Heart right ventricle (tissue), 16 donors: ENCODE measurements at regions of chrX and their contacts with region 1.

Region 1: GRCh38 chrX:149363965-149364364 is 141.1 kb downstream of the IDS start:
- DNase-seq: no peak
- ATAC-seq: no peak
- H3K4me3 ChIP-seq: no peak overlapping the region
- H3K27ac ChIP-seq: no peak overlapping the region
- H3K4me1 ChIP-seq: no peaks in the 10 kb centered on the region
- H3K27me3 ChIP-seq: peaks cover 0 to 6% (median 0%) of the 10 kb centered on the region in 7 donors
- CTCF ChIP-seq: no peak

Region 2: DNA sequence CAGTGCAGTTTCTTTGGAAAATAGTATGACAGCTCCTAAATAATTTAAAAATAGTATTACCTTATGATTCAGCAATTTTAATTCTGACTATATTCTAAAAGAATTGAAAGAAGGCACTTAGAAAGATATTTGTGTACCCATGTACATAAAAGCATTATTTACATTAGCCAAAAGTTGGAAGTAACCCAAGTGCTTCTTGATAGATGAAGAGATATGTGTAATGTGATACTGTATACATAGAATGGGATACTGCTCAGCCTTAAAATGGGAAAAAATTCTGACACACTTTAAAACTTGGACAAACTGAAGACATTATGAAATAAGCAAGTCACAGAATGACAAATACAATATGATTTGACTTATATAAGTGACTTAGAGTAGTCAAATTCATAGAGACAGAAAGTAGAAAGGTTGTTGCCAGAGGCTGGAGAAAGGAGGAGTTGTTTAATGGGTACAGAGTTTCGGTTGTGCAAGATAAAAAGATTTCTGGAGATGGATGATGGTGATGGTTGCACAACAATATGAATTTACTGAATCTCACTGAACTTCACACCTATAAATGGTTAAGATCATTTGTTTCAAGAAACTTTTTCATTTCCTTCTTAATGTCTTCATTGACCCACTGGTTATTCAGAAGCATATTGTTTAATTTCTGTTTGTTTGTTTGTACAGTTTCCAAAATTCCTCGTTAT is 29.1 kb after region 1 on chrX:
- intact Hi-C with region 1: loop called in 1 of 10 experiments (anchors 2 kb)
- DNase-seq: no peak
- ATAC-seq: no peak
- H3K4me3 ChIP-seq: no peak overlapping the region
- H3K27ac ChIP-seq: no peak overlapping the region
- H3K4me1 ChIP-seq: no peaks in the 10 kb centered on the region
- H3K27me3 ChIP-seq: no peaks in the 10 kb centered on the region
- CTCF ChIP-seq: no peak

Region 3: GRCh38 chrX:149462849-149463248 is 98.9 kb after region 1 on chrX:
- intact Hi-C with region 1: no loop called
- DNase-seq: peak in 1 of 2 donors; percentile 9
- ATAC-seq: peak in 3 of 8 donors; percentile 33 to 69 (median 61)
- H3K4me3 ChIP-seq: no peak overlapping the region
- H3K27ac ChIP-seq: peak overlapping the region in 1 of 10 donors; percentile 4
- H3K4me1 ChIP-seq: no peaks in the 10 kb centered on the region
- H3K27me3 ChIP-seq: peaks cover 0 to 11% (median 0%) of the 10 kb centered on the region in 7 donors
- CTCF ChIP-seq: no peak